ENCODE measurements at regions of chr15 and their contacts with region 1.

Region 1: DNA sequence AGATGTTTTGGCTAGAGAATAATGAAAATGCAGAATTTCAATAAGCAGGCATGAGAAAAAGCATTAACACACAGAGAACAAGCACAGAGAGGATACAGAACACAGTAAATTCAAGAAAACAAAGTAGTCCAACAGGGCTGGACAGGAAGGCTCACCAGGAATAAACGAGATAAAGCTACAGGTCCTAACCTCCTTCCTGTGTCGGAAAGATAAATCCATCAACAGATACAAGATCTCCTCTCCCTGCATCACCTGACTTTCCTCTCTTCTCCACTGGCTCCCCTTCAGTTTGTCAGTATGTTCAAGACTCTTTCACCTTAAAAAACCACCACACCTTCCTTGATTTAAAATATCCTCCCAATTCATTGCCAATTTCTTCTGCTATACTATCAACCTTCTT is 11.4 kb downstream of the CPEB1 start:
- DNase-seq: no peak
- ATAC-seq: no peak
- H3K4me3 Mint-ChIP-seq: no peak overlapping the region
- H3K27ac Mint-ChIP-seq: no peak overlapping the region
- H3K4me1 Mint-ChIP-seq: no peaks in the 10 kb centered on the region
- H3K27me3 Mint-ChIP-seq: peaks cover 38% of the 10 kb centered on the region
- CTCF ChIP-seq: no peak

Region 2: DNA sequence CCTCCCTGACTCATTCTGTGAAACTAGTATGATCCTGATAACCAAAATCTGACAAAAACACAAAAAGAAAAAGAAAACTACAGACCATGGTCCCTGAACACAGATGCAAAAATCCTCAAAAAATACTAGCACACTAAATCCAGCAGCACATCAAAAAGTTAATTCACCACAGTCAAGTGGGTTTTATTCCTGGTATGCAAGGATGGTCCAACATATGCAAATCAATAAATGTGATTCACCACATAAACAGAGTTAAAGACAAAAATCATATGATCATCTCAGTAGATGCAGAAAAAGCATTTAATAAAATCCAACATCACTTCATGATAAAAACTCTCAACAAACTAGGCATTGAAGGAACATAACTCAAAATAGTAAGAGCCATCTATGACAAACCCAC is 360.4 kb before region 1 on chr15:
- CTCF ChIA-PET with region 1: no interaction called
- POLR2A ChIA-PET with region 1: no interaction called
- DNase-seq: no peak
- ATAC-seq: no peak
- H3K4me3 Mint-ChIP-seq: no peak overlapping the region
- H3K27ac Mint-ChIP-seq: no peak overlapping the region
- H3K4me1 Mint-ChIP-seq: peaks cover 9% of the 10 kb centered on the region
- H3K27me3 Mint-ChIP-seq: peaks cover 3% of the 10 kb centered on the region
- CTCF ChIP-seq: no peak

Region 3: GRCh38 chr15:82621964-82622363 is 13.8 kb before region 1 on chr15:
- CTCF ChIA-PET with region 1: interaction called, 12 read pairs
- POLR2A ChIA-PET with region 1: no interaction called
- DNase-seq: no peak
- ATAC-seq: peak; percentile 88
- H3K4me3 Mint-ChIP-seq: no peak overlapping the region
- H3K27ac Mint-ChIP-seq: no peak overlapping the region
- H3K4me1 Mint-ChIP-seq: no peaks in the 10 kb centered on the region
- H3K27me3 Mint-ChIP-seq: no peaks in the 10 kb centered on the region
- CTCF ChIP-seq: no peak

Region 4: GRCh38 chr15:82882273-82882928 is 246.6 kb after region 1 on chr15:
- CTCF ChIA-PET with region 1: no interaction called
- POLR2A ChIA-PET with region 1: no interaction called
- DNase-seq: no peak
- ATAC-seq: no peak
- H3K4me3 Mint-ChIP-seq: no peak overlapping the region
- H3K27ac Mint-ChIP-seq: no peak overlapping the region
- H3K4me1 Mint-ChIP-seq: no peaks in the 10 kb centered on the region
- H3K27me3 Mint-ChIP-seq: no peaks in the 10 kb centered on the region
- CTCF ChIP-seq: no peak

Region 5: GRCh38 chr15:82972990-82973389 is 337.2 kb after region 1 on chr15:
- CTCF ChIA-PET with region 1: no interaction called
- POLR2A ChIA-PET with region 1: no interaction called
- DNase-seq: no peak
- ATAC-seq: no peak
- H3K4me3 Mint-ChIP-seq: no peak overlapping the region
- H3K27ac Mint-ChIP-seq: no peak overlapping the region
- H3K4me1 Mint-ChIP-seq: no peaks in the 10 kb centered on the region
- H3K27me3 Mint-ChIP-seq: peaks cover 19% of the 10 kb centered on the region
- CTCF ChIP-seq: no peak

Measured in WTC11 (cell line).